ENCODE measurements at regions of chr1 and their contacts with region 1.

Region 1: DNA sequence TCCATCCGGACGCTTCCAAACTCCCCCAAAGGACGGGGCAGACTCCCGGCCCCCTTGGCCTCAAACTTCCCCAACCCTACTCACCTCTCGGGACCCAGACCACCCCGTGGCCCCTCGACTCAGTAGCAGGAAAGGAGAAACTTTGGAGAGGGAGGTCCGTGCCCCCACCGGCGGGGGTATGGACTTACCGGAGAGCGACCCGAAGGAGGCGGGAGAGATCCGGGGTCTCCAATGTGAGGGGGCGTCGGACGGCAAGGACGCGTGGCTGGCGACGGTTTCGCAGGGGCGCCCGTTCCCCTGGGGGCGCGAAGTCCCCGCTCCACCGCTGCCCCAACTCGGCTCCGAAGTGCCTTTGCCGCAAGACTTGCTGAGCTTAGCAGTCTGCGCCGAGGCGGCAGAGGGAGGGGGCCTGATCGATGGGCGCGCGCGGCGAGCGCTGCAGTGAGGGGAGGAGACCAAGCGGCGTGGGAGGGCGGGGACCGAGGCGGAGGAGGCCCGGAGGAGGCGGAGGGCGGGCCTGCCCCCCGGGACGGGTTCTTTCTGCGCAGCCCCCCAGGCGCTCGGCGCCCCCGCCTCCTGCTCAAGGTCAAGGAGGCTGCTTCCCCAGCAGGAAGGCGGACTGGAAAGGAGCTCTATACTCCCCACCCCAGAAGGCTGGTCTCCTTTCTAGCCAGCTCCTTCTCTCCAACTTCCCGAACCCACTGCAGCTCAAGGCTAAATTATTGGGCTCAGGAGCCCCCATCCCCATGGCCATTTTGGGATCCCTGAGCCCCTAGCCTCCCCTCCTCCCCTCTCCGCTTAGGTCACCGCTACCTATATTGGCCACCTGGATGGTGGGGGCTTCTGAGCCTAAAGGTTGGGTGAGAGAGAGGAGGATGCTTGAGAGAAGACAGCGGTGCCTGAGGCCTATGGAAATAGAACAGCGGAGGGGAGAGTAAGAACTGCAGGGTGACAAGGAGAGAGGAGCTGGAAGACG is at the start of gene SYT2:
- DNase-seq: no peak
- H3K4me3 Mint-ChIP-seq: no peak within 1 kb of the TSS
- H3K27ac Mint-ChIP-seq: no peak within 1 kb of the TSS
- H3K4me1 Mint-ChIP-seq: no peaks in the 10 kb centered on the region
- H3K27me3 Mint-ChIP-seq: peaks cover 88% of the 10 kb centered on the region
- CTCF ChIP-seq: no peak
- total RNA-seq, gene SYT2: not detected in 2 replicates

Region 2: GRCh38 chr1:202605515-202605914 is 104.8 kb before region 1 on chr1:
- CTCF ChIA-PET with region 1: interaction called, 7 read pairs
- POLR2A ChIA-PET with region 1: no interaction called
- intact Hi-C with region 1: loop called (anchors 2 kb)
- DNase-seq: no peak
- H3K4me3 Mint-ChIP-seq: no peak overlapping the region
- H3K27ac Mint-ChIP-seq: no peak overlapping the region
- H3K4me1 Mint-ChIP-seq: no peaks in the 10 kb centered on the region
- H3K27me3 Mint-ChIP-seq: no peaks in the 10 kb centered on the region
- CTCF ChIP-seq: no peak